Left ventricle myocardium superior (tissue), 1 donor: ENCODE measurements at regions of chr2 and their contacts with region 1.

Region 1: DNA sequence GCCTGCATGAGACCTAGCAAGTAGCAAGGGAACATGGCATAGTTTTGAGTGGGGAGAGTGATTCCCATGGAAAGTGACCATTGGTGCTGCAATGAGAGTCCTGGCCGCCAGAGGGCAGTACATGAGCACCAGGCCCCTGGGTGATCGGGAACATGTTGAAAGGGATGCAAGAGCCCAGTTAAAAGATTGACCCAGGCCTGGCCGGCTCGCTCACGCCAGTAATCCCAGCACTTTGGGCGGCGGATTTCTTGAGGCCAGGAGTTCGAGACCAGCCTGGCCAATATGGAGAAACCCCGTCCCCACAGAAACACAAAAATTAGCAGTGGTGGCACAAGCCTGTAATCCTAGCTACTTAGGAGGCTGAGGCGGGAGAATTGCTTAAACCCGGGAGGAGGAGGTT is 22.2 kb downstream of the FAP start:
- DNase-seq: peak; percentile 71
- ATAC-seq: peak; percentile 63

Region 2: DNA sequence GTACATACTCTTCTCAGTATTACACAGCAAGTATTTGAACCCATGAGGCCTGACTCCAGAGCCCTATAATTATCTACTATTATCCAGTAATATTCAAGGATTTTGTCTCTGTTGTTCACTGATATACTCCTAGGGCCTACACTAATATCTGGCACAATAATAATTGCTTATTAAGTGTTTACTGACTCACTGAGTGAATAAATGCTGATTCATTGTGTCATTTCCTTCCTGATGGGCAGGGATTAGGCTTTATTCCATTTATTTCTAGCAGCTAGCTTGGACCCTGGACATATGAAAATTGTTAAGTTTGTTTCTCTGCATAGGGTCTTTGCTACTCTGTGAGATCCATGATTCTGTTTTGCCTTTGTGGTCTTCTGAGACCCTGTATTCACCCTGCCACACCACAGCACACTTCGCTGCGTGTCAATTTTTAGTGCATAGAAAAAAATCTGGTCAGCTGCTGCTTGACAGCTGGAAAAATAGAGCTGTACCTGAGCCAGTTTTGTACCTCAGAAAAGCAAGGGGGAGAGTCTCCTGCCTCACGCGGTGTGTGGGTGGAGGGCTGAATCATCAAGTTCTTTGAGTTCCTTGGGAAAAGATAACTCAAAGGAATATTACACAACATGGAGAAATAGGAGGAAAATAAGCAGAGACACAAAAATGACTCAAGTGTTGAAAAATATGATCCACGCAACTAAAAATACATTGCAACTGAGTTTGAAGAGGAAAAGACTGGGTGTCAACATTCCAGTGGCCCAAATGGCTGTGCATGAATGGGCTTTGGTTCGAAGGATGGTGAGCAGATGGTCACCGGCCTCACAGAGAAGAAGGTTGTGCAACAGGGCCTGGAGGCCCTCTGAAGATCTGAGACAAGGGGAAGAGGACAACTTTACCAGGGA is 128.2 kb before region 1 on chr2:
- intact Hi-C with region 1: no loop called
- DNase-seq: peak; percentile 57
- ATAC-seq: peak; percentile 91

Region 3: GRCh38 chr2:162297925-162298552 is 77.0 kb after region 1 on chr2:
- intact Hi-C with region 1: loop called (anchors 5 kb)
- DNase-seq: no peak
- ATAC-seq: peak; percentile 25